Tibial artery (tissue), 4 donors: ENCODE measurements at regions of chr4 and their contacts with region 1.

Region 1: DNA sequence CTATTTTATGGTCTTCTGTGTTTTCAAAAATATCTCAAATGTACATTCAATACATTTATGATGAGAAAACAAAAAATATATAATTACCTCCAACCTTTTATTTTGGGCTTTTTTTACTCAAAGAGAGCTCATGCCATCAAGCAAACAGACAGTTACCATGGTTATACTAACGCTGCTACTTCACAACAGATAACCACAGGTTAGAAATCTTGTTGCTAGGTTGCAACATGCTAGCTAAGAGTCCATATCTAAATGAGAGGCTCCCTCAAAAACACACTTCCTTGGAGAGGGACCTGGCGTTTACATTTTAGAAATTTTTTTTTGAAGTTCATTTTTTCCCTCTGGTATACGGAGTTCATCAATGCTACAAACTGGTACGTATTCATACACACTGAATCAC is 44.3 kb downstream of the TBC1D9 start:
- DNase-seq: no peak
- H3K4me3 ChIP-seq: no peak overlapping the region
- H3K27ac ChIP-seq: no peak overlapping the region
- H3K4me1 ChIP-seq: no peaks in the 10 kb centered on the region
- H3K27me3 ChIP-seq: no peaks in the 10 kb centered on the region
- CTCF ChIP-seq: no peak

Region 2: DNA sequence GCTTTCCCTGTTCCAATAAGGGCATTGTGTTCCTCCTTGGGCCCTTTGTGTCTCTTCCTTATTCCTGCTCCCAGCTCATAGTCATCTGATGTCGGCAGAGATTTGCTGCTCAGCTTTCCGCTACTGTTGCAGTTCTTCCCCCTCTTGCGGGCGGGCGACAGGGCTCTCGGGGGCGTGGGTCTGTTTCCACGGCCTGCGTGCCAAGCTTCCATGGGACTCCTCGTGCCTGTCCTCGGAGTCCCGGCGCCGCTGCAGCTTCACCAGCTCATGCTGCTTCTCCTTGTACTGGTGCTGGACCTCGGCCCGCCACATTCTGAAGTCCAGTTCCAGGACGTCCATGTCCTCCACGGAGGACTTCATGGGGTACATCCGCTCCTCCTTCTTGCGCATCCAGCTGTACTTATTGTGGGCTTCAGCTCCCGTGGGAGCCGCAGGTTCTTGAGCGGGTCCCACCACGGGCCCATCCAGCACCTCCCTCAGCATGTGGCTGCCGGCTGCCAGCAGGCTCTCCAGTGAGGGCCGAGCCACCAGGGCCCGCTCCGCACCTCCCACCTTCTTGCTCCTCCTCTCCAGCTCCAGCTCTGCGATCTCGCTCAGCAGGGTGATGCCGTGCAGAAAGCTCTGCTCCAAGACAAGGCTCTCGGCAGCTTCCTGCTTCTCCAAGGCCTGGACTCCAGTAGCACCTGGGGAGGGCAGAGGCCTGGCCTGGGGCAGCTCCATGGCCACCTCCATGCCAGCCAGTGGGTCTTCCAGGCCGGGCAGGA is 69.1 kb before region 1 on chr4:
- intact Hi-C with region 1: loop called (anchors 1 kb)
- DNase-seq: no peak
- H3K4me3 ChIP-seq: no peak overlapping the region
- H3K27ac ChIP-seq: no peak overlapping the region
- H3K4me1 ChIP-seq: no peaks in the 10 kb centered on the region
- H3K27me3 ChIP-seq: no peaks in the 10 kb centered on the region
- CTCF ChIP-seq: no peak

Region 3: DNA sequence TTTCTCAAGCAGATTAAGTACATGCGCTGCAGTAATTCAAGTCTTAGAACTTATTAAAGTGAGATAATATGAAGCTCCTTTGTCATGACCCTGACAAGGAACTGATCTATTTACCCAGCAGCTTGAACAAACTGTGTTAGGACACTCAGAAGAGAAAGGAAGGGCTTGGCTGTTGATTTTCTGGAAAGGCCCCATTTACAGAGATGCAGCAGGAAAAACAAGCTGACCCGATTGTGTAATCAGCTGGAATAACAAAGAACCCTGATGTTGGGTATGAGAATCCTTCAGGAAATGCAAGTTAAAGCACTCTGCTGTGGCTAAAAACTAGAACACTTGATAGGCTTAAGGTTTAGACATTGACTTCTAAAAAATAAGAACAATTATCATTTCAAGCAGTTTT is 20.6 kb before region 1 on chr4:
- intact Hi-C with region 1: no loop called
- DNase-seq: no peak
- H3K4me3 ChIP-seq: no peak overlapping the region
- H3K27ac ChIP-seq: no peak overlapping the region
- H3K4me1 ChIP-seq: peaks cover 0 to 18% (median 0%) of the 10 kb centered on the region in 4 donors
- H3K27me3 ChIP-seq: no peaks in the 10 kb centered on the region
- CTCF ChIP-seq: no peak